Adrenal gland (tissue), 19 donors: ENCODE measurements at regions of chr9 and their contacts with region 1.

Region 1: GRCh38 chr9:37262410-37262809 is 142.0 kb downstream of the ZCCHC7 start:
- DNase-seq: peak; percentile 23 to 63 (median 27)
- H3K4me3 ChIP-seq: no peak overlapping the region
- H3K27ac ChIP-seq: no peak overlapping the region
- H3K4me1 ChIP-seq: no peaks in the 10 kb centered on the region
- H3K27me3 ChIP-seq: no peaks in the 10 kb centered on the region
- CTCF ChIP-seq: peak in 5 of 6 experiments; percentile 32 to 57 (median 54)
- POLR2A ChIP-seq: no peak

Region 2: GRCh38 chr9:36873247-36873875 is 389.0 kb before region 1 on chr9:
- intact Hi-C with region 1: loop called in 1 of 2 experiments (anchors 5 kb)
- DNase-seq: peak; percentile 64 to 80 (median 68)
- H3K4me3 ChIP-seq: no peak overlapping the region
- H3K27ac ChIP-seq: no peak overlapping the region
- H3K4me1 ChIP-seq: peaks cover 0 to 8% of the 10 kb centered on the region in 2 donors
- H3K27me3 ChIP-seq: no peaks in the 10 kb centered on the region
- CTCF ChIP-seq: peak; percentile 68 to 83 (median 76)
- POLR2A ChIP-seq: no peak

Region 3: GRCh38 chr9:36995927-36996705 is 266.3 kb before region 1 on chr9:
- intact Hi-C with region 1: loop called in 1 of 2 experiments (anchors 10 kb)
- DNase-seq: peak; percentile 36 to 70 (median 64)
- H3K4me3 ChIP-seq: no peak overlapping the region
- H3K27ac ChIP-seq: no peak overlapping the region
- H3K4me1 ChIP-seq: no peaks in the 10 kb centered on the region
- H3K27me3 ChIP-seq: peaks cover 9% of the 10 kb centered on the region
- CTCF ChIP-seq: peak; percentile 24 to 63 (median 51)
- POLR2A ChIP-seq: no peak

Region 4: GRCh38 chr9:37465249-37466036 is 203.0 kb after region 1 on chr9 and contains the start of gene ZBTB5:
- intact Hi-C with region 1: no loop called
- DNase-seq: peak; percentile 98 to 100 (median 100)
- H3K4me3 ChIP-seq: peak within 1 kb of the TSS; percentile 21 to 96 (median 86)
- H3K27ac ChIP-seq: peak within 1 kb of the TSS; percentile 93 to 100 (median 99)
- H3K4me1 ChIP-seq: peaks cover 11 to 26% of the 10 kb centered on the region in 2 donors
- H3K27me3 ChIP-seq: no peaks in the 10 kb centered on the region
- CTCF ChIP-seq: no peak
- POLR2A ChIP-seq: peak in 1 of 2 donors; percentile 81
- total RNA-seq, gene ZBTB5: 6.2 to 19.6 (median 10.9) TPM